ENCODE measurements at regions of chr20 and their contacts with region 1.

Region 1: GRCh38 chr20:62302341-62303058 is at the start of gene ADRM1:
- DNase-seq: peak; percentile 95 to 96 (median 95)
- H3K4me3 ChIP-seq: peak within 1 kb of the TSS; percentile 72 to 96 (median 85)
- H3K4me3 Mint-ChIP-seq: peak within 1 kb of the TSS; percentile 90 to 95
- H3K27ac ChIP-seq: peak within 1 kb of the TSS; percentile 96 to 98
- H3K27ac Mint-ChIP-seq: peak within 1 kb of the TSS; percentile 93 to 99 (median 98)
- H3K4me1 ChIP-seq: peaks cover 17 to 18% of the 10 kb centered on the region in 2 donors
- H3K4me1 Mint-ChIP-seq: peaks cover 26% of the 10 kb centered on the region
- H3K27me3 ChIP-seq: no peaks in the 10 kb centered on the region
- H3K27me3 Mint-ChIP-seq: peaks cover 0 to 4% (median 3%) of the 10 kb centered on the region in 3 donors
- CTCF ChIP-seq: peak; percentile 80
- polyA plus RNA-seq, gene ADRM1: 63.3 to 81.5 (median 72.5) TPM

Region 2: DNA sequence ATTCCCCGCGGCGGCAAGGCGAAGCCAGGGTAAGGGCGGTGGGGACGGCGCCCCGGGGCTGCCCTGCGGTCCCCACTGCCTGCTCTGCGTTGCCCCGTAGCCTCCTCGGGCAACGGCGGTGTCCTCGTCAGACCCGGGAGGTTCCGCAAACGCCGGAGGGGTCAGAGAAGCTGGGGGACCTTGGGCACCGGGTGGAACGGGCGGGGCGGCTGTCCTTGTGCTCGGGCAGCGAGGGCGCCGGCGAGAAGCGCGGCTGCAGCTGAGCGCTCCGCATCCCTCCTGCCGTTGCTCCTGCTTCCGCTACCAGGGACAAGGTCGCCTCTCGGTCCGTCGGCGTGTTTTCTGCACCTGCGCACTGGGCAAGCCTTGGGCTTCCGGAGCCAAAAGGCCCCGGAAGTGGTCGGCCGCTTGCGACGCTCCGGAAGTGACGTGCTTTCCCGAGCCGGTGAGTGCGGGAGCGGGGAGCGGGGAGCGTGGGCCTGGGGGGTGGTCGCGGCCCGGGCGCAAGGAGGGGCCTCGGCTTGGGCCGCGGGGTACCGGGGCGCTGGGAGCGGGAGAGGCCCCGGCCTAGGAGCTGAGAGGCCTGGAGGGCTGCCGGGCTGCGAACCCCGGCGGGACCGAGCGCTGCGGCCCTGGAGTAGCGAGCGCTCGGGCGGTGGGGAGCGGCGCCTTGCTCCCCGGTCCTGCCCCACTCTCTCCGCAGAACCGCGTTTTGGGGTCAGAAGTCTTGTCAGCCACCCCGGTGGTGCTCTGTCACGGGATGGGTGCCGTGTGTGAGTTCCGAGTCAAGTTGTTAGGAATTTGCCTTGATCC is 119.7 kb before region 1 on chr20 and contains the start of gene MTG2:
- intact Hi-C with region 1: loop called in 1 of 2 experiments (anchors 5 kb)
- DNase-seq: peak; percentile 96 to 97 (median 96)
- H3K4me3 ChIP-seq: peak within 1 kb of the TSS; percentile 77 to 99 (median 84)
- H3K4me3 Mint-ChIP-seq: peak within 1 kb of the TSS; percentile 87 to 91
- H3K27ac ChIP-seq: peak within 1 kb of the TSS; percentile 57 to 92
- H3K27ac Mint-ChIP-seq: peak within 1 kb of the TSS; percentile 89 to 96 (median 93)
- H3K4me1 ChIP-seq: peaks cover 20 to 31% of the 10 kb centered on the region in 2 donors
- H3K4me1 Mint-ChIP-seq: peaks cover 43% of the 10 kb centered on the region
- H3K27me3 ChIP-seq: no peaks in the 10 kb centered on the region
- H3K27me3 Mint-ChIP-seq: peaks cover 0 to 2% (median 0%) of the 10 kb centered on the region in 3 donors
- CTCF ChIP-seq: no peak
- polyA plus RNA-seq, gene MTG2: 10.8 to 16.1 (median 14.9) TPM

Region 3: DNA sequence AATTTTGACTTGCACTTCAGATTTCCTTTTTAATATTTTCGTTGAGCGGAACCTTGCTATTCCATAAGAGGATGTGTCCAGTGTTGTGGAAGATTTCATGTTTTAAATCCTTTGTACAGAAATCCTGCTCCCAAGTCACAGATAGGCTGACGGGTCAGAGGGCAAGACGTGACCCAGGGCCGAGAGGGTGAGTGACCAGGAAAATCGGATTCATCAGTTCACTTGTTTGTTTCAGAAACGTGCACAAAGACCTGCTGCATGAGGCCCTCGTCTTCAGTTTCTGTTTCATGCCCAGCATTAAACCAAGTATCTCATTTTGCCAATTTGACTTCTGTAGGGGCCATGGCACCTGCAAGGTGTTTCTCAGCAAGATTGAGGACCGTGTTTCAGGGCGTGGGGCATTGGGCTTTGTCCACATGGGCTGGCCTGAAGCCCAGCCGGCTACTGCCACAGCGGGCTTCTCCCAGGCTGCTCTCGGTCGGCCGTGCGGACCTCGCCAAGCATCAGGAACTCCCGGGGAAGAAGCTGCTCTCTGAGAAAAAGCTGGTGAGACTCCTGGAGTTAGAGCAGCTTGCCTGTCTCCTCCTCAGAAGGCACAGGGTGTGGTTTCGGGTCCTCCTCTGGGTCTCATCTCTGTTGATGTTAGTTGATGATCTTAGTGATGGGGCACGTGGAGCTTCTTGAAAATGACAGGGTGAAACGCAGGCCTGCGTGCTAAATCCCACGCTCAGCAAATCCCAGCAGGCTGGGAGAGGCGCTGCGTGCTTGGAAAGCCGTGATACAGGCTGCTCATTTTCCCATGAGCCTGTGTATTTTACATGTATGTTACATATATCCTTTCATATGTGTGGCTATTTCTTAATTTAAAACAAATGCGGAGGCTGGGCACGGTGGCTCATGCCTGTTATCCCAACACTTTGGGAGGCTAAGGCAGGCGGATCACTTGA is 109.1 kb before region 1 on chr20:
- intact Hi-C with region 1: no loop called
- DNase-seq: no peak
- H3K4me3 ChIP-seq: no peak overlapping the region
- H3K4me3 Mint-ChIP-seq: no peak overlapping the region
- H3K27ac ChIP-seq: no peak overlapping the region
- H3K27ac Mint-ChIP-seq: peak overlapping the region in 1 of 7 donors; percentile 42
- H3K4me1 ChIP-seq: no peaks in the 10 kb centered on the region
- H3K4me1 Mint-ChIP-seq: no peaks in the 10 kb centered on the region
- H3K27me3 ChIP-seq: no peaks in the 10 kb centered on the region
- H3K27me3 Mint-ChIP-seq: peaks cover 0 to 3% (median 1%) of the 10 kb centered on the region in 3 donors
- CTCF ChIP-seq: no peak

Region 4: GRCh38 chr20:62386383-62387218 is 84.1 kb after region 1 on chr20 and contains the start of gene RPS21:
- intact Hi-C with region 1: loop called (anchors 1 to 5 kb)
- DNase-seq: peak; percentile 90 to 92 (median 90)
- H3K4me3 ChIP-seq: peak within 1 kb of the TSS; percentile 84 to 96 (median 84)
- H3K4me3 Mint-ChIP-seq: peak within 1 kb of the TSS; percentile 89 to 91
- H3K27ac ChIP-seq: peak within 1 kb of the TSS; percentile 57 to 96
- H3K27ac Mint-ChIP-seq: peak within 1 kb of the TSS; percentile 85 to 96 (median 91)
- H3K4me1 ChIP-seq: peaks cover 19 to 25% of the 10 kb centered on the region in 2 donors
- H3K4me1 Mint-ChIP-seq: peaks cover 30% of the 10 kb centered on the region
- H3K27me3 ChIP-seq: no peaks in the 10 kb centered on the region
- H3K27me3 Mint-ChIP-seq: no peaks in the 10 kb centered on the region
- CTCF ChIP-seq: no peak
- polyA plus RNA-seq, gene RPS21: 799 to 6,263 (median 968) TPM

Region 5: DNA sequence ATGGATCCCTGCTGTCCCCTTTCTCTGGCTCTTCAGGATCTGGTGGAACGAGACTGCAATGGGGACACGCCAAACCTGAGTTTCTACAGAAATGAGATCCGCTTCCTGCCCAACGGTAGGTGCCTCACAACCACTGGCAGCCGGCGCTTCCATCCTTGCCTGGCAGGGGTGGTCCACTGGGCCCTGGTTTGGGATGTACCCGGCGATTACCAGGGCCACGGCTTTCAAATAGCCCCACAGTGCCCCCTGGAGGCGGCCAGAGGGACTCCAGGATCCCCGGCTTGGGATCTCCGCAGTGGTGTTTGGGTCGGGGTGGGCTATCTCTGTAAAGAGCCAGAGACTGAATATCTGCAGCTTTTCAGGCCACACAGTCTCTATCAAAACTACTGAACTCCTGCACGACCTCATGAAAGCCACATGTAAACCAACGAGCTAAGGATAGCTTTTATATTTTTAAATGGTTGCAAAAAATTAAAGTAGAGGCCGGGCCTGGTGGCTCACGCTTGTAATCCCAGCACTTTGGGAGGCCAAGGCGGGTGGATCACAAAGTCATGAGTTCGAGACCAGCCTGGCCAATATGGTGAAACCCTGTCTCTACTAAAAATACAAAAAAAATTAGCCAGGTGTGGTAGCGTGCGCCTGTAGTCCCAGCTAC is 505.8 kb after region 1 on chr20:
- intact Hi-C with region 1: loop called (anchors 5 to 10 kb)
- DNase-seq: peak; percentile 53 to 69 (median 64)
- H3K4me3 ChIP-seq: no peak overlapping the region
- H3K4me3 Mint-ChIP-seq: no peak overlapping the region
- H3K27ac ChIP-seq: peak overlapping the region in 1 of 2 donors; percentile 15
- H3K27ac Mint-ChIP-seq: peak overlapping the region in 4 of 7 donors; percentile 12 to 71 (median 44)
- H3K4me1 ChIP-seq: peaks cover 40 to 43% of the 10 kb centered on the region in 2 donors
- H3K4me1 Mint-ChIP-seq: peaks cover 35% of the 10 kb centered on the region
- H3K27me3 ChIP-seq: no peaks in the 10 kb centered on the region
- H3K27me3 Mint-ChIP-seq: peaks cover 0 to 13% (median 7%) of the 10 kb centered on the region in 3 donors
- CTCF ChIP-seq: peak; percentile 95

Region 6: DNA sequence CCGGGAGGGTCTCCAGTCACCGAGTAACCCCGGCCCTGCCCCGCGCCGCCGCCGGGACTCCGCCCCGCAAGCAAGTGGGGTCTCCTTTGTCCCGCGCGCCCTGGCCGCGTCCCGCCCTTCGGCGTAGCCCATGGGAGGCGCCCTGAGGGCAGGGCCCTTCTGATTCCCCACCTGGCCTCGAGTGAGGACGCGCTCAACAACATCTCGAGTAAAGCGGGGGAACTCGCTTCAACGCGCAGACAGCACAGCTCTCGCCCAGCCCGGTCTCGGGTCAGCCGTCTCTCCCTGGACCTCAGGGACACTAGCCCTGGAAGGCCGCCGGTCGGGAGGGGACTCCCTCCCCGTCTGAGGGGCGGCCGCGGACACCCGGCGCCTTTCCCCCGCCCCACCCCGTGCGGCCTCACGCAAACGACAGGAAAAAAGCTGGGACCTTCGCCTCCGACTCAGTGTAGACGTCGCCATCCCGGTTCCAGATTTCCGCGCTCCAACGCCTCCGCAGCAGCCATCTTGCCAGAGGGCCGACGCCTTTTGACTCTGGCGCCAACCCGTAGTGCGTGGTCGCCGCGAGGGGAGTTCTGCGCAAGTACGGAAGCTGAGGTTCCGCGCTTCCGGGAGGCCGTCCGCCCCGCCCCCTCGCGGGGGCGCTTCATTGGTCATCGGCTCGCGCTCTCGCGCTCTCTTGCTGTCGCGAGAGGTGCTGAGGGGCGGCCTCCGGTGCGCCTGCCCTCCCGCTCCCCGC is 635.0 kb after region 1 on chr20:
- intact Hi-C with region 1: loop called in 1 of 2 experiments (anchors 10 kb)
- DNase-seq: peak; percentile 94 to 97 (median 97)
- H3K4me3 ChIP-seq: peak overlapping the region; percentile 94 to 99 (median 97)
- H3K4me3 Mint-ChIP-seq: peak overlapping the region; percentile 92 to 96
- H3K27ac ChIP-seq: peak overlapping the region; percentile 59 to 88
- H3K27ac Mint-ChIP-seq: peak overlapping the region; percentile 78 to 96 (median 90)
- H3K4me1 ChIP-seq: peaks cover 27 to 36% of the 10 kb centered on the region in 2 donors
- H3K4me1 Mint-ChIP-seq: peaks cover 28% of the 10 kb centered on the region
- H3K27me3 ChIP-seq: no peaks in the 10 kb centered on the region
- H3K27me3 Mint-ChIP-seq: peaks cover 0 to 1% (median 0%) of the 10 kb centered on the region in 3 donors
- CTCF ChIP-seq: no peak